Ascending aorta (tissue), 2 donors: ENCODE measurements at regions of chr1 and their contacts with region 1.

Region 1: DNA sequence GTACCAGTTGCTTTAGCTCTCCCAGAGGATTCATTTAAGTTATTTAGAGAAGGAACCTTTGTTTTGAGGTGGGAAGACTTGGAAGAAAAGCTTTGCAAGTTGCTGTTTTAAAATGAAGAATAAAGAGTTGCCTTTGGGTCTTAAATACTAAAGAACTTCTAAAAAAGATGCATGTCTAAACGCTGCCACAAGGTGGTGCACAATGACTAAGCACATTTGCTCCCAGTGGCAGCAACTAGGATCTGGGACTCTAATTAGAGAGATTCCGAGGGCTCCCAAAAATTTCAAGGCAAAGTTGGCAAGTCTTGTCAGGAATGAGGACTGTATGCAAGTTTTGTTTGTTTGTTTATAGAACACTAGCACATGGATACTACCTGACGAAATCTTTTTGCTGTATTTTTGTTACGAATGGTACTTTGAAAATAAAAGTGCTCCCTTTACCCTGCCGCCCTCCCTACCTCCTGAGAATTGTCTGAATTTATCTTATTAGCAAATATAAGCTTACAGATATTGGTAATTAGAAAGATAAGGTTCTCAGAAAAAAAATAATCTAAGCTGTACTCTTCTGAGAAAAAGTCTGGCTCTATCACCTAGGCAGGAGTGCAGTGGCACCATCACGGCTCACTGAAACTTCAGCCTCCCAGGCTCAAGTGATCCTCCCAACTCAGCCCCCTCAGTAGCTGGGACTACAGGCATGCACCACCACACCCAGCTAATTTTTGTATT is 121.8 kb downstream of the HFM1 start:
- DNase-seq: peak in 1 of 2 donors; percentile 72
- H3K4me3 ChIP-seq: peak overlapping the region in 1 of 2 donors; percentile 41
- H3K27ac ChIP-seq: no peak overlapping the region
- H3K4me1 ChIP-seq: no peaks in the 10 kb centered on the region
- H3K27me3 ChIP-seq: no peaks in the 10 kb centered on the region
- CTCF ChIP-seq: peak; percentile 28 to 75 (median 63)

Region 2: GRCh38 chr1:91345395-91346005 is 62.6 kb after region 1 on chr1:
- intact Hi-C with region 1: no loop called
- DNase-seq: no peak
- H3K4me3 ChIP-seq: no peak overlapping the region
- H3K27ac ChIP-seq: no peak overlapping the region
- H3K4me1 ChIP-seq: no peaks in the 10 kb centered on the region
- H3K27me3 ChIP-seq: no peaks in the 10 kb centered on the region
- CTCF ChIP-seq: no peak

Region 3: DNA sequence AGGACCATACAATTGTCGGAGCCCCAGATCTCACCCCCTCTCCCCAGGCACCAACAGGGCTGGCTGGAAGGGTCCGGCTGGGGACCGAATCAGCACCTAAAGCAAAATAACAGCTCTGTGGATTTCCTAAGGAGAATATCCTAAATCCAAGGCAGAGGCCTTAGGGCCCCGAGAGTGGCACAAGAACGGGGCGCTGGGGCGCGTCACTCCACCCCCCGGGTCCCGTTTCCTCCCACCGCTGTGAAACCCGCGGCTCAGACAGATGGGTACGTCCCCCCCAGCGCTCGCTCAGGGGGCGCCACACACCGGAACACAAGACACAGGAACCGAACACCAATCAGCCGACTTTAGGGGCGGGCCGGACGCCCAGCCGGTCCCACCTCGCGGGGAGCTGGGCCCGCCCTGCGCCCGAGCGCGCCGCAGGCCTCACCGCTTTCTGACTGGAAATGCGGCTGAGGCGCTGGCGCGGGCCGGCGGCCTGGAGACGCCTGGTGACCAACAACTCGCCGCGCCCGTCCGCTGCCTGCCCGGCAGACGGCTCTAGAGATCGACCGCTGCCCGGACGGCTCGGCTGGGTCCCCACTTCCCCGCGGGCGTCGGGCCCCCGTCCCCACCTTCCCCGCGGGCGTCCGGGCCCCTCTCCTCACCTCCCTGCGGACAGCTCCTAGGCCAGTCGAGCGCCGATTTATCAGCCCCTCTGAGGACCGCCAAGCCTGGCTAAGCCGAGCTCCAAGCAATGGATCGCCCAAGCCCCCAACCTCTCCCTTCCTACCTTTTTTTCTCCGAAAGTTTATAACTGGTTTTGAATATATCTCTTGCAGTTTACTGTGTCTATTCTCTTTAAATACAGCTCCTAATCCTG is 121.5 kb after region 1 on chr1 and contains the start of gene HFM1:
- intact Hi-C with region 1: loop called (anchors 5 kb)
- DNase-seq: peak; percentile 8 to 81
- H3K4me3 ChIP-seq: peak within 1 kb of the TSS; percentile 58 to 67
- H3K27ac ChIP-seq: peak within 1 kb of the TSS; percentile 46 to 65
- H3K4me1 ChIP-seq: no peaks in the 10 kb centered on the region
- H3K27me3 ChIP-seq: no peaks in the 10 kb centered on the region
- CTCF ChIP-seq: no peak
- total RNA-seq, gene HFM1: 0.32 TPM

Region 4: DNA sequence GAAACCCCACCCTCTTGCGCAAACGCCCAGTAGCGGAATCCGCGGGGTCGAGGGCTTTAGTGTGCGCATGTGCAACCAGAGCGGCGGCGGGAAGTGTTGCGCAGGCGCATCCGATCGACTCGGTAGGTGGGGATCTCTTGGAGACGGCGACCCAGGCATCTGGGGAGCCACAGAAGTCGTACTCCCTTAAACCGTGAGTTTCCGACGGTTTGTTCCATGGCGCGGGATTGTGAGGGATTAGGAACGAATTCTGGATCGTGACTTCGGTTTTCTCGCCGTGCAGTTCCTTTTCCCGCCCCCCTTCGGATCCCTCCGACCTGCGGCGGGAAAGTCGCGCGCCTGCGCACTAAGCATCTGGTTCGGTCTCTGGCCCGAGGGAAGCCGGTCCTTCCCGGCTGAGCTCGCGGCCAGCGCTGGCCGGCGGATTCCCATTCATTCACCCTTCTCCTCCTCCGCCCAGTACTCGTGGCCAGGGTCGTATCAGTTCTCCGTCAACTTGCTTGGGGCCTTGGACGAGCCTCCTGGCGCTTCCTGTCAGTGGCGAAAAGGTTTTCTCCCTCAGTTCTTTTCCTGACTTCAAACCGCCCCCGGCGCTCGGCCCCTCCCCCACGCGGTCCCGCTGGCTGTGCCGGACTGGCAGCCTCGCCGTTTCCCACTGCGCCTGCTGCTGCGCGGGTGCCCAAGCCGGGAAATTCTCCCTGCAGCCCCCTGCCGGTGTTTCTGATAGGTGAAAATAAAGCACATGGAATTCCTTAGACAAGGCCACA is 218.1 kb after region 1 on chr1 and contains the start of gene CDC7:
- intact Hi-C with region 1: loop called (anchors 5 kb)
- DNase-seq: peak; percentile 29 to 94
- H3K4me3 ChIP-seq: peak within 1 kb of the TSS; percentile 61 to 82
- H3K27ac ChIP-seq: peak within 1 kb of the TSS; percentile 68 to 78
- H3K4me1 ChIP-seq: no peaks in the 10 kb centered on the region
- H3K27me3 ChIP-seq: no peaks in the 10 kb centered on the region
- CTCF ChIP-seq: peak in 1 of 3 experiments; percentile 26
- total RNA-seq, gene CDC7: 2.7 TPM

Region 5: DNA sequence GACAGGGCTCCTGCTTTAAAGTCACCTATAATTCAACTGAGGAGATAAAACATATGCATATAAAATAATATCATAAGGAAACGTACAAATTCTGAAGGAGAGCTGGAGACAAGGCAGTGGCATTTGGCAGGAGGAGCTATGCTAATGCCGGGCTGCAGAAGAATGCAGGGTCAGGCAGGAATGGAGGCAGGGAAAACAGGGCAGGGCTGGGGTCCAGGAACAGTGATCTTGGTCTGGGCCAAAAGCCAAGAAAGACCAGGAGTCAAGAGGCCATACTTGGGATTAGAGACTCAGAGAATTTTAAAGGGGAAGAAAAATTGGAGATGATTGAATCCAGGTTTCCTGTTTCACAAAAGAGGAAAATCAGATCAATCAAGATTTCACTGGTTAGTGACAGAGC is 646.4 kb after region 1 on chr1:
- intact Hi-C with region 1: loop called (anchors 5 kb)
- DNase-seq: no peak
- H3K4me3 ChIP-seq: no peak overlapping the region
- H3K27ac ChIP-seq: no peak overlapping the region
- H3K4me1 ChIP-seq: no peaks in the 10 kb centered on the region
- H3K27me3 ChIP-seq: no peaks in the 10 kb centered on the region
- CTCF ChIP-seq: no peak